ENCODE measurements at regions of chr19 and their contacts with region 1.

Region 1: GRCh38 chr19:57435062-57435978 is at the start of gene ZNF749:
- DNase-seq: peak; percentile 93 to 100 (median 96)
- ATAC-seq: peak; percentile 99
- H3K4me3 ChIP-seq: peak within 1 kb of the TSS; percentile 57 to 86
- H3K4me3 Mint-ChIP-seq: peak within 1 kb of the TSS; percentile 99
- H3K27ac ChIP-seq: peak within 1 kb of the TSS; percentile 52 to 80
- H3K27ac Mint-ChIP-seq: peak within 1 kb of the TSS; percentile 97
- H3K4me1 ChIP-seq: peaks cover 11% of the 10 kb centered on the region
- H3K4me1 Mint-ChIP-seq: peaks cover 34% of the 10 kb centered on the region
- H3K27me3 ChIP-seq: no peaks in the 10 kb centered on the region
- H3K27me3 Mint-ChIP-seq: no peaks in the 10 kb centered on the region
- CTCF ChIP-seq: no peak
- total RNA-seq, gene ZNF749: 5.6 to 9.1 TPM

Region 2: DNA sequence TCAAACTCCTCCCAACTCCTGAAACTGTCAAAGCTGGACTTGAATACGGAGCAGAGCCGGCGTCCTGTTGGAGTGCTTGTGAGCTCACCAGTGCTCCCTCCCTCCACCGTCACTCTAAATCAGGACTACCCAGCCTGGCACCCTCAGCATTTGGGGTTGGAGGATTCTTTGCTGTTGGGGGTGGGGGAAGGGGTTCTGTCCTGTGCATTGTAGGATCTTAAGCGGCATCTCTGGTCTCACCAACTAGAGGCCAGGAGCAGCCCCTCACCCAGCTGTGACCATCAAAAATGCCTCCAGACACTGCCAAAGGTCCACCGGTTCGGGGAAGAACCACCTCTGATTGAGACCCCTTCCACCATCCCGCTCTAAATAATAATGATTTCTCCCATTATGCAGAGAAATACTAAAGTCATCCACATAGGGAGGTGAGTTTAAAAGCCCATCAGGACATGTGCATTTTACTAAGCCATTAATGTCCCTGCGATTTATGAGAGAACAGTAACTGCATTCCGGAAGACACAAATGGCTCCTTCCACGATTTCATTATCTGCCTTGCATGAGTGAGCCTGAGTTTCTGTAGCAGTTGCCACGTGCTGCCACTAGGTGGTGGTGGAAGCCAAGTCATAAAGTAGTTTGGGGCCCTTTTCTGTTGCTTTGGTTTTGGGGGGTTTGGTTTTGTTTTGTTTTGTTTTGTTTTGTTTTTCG is 331.6 kb before region 1 on chr19:
- CTCF ChIA-PET with region 1: no interaction called
- POLR2A ChIA-PET with region 1: no interaction called
- intact Hi-C with region 1: loop called in 1 of 2 experiments (anchors 10 kb)
- DNase-seq: peak; percentile 14 to 79 (median 59)
- ATAC-seq: peak; percentile 97
- H3K4me3 ChIP-seq: peak overlapping the region in 1 of 2 experiments; percentile 11
- H3K4me3 Mint-ChIP-seq: peak overlapping the region; percentile 70
- H3K27ac ChIP-seq: no peak overlapping the region
- H3K27ac Mint-ChIP-seq: no peak overlapping the region
- H3K4me1 ChIP-seq: peaks cover 4% of the 10 kb centered on the region
- H3K4me1 Mint-ChIP-seq: peaks cover 6% of the 10 kb centered on the region
- H3K27me3 ChIP-seq: peaks cover 0 to 4% of the 10 kb centered on the region in 2 experiments
- H3K27me3 Mint-ChIP-seq: peaks cover 26% of the 10 kb centered on the region
- CTCF ChIP-seq: peak; percentile 82

Region 3: GRCh38 chr19:57288373-57288772 is 146.9 kb before region 1 on chr19:
- CTCF ChIA-PET with region 1: no interaction called
- POLR2A ChIA-PET with region 1: no interaction called
- intact Hi-C with region 1: no loop called
- DNase-seq: no peak
- ATAC-seq: no peak
- H3K4me3 ChIP-seq: no peak overlapping the region
- H3K4me3 Mint-ChIP-seq: no peak overlapping the region
- H3K27ac ChIP-seq: no peak overlapping the region
- H3K27ac Mint-ChIP-seq: no peak overlapping the region
- H3K4me1 ChIP-seq: no peaks in the 10 kb centered on the region
- H3K4me1 Mint-ChIP-seq: peaks cover 31% of the 10 kb centered on the region
- H3K27me3 ChIP-seq: no peaks in the 10 kb centered on the region
- H3K27me3 Mint-ChIP-seq: no peaks in the 10 kb centered on the region
- CTCF ChIP-seq: no peak

Region 4: GRCh38 chr19:57350877-57351805 is 84.2 kb before region 1 on chr19 and contains the start of gene ZNF304:
- CTCF ChIA-PET with region 1: no interaction called
- POLR2A ChIA-PET with region 1: no interaction called
- intact Hi-C with region 1: loop called in 1 of 2 experiments (anchors 2 kb)
- DNase-seq: peak; percentile 58 to 93 (median 81)
- ATAC-seq: peak; percentile 99
- H3K4me3 ChIP-seq: peak within 1 kb of the TSS; percentile 79 to 87
- H3K4me3 Mint-ChIP-seq: peak within 1 kb of the TSS; percentile 96
- H3K27ac ChIP-seq: peak within 1 kb of the TSS; percentile 68 to 73
- H3K27ac Mint-ChIP-seq: peak within 1 kb of the TSS; percentile 93
- H3K4me1 ChIP-seq: peaks cover 13% of the 10 kb centered on the region
- H3K4me1 Mint-ChIP-seq: peaks cover 32% of the 10 kb centered on the region
- H3K27me3 ChIP-seq: peaks cover 0 to 4% of the 10 kb centered on the region in 2 experiments
- H3K27me3 Mint-ChIP-seq: no peaks in the 10 kb centered on the region
- CTCF ChIP-seq: no peak
- total RNA-seq, gene ZNF304: 8.6 TPM

Region 5: GRCh38 chr19:57410877-57411671 is 24.2 kb before region 1 on chr19 and contains the start of gene ZNF17:
- CTCF ChIA-PET with region 1: no interaction called
- POLR2A ChIA-PET with region 1: no interaction called
- intact Hi-C with region 1: loop called (anchors 1 kb)
- DNase-seq: peak; percentile 83 to 96 (median 91)
- ATAC-seq: peak; percentile 100
- H3K4me3 ChIP-seq: peak within 1 kb of the TSS; percentile 82 to 99
- H3K4me3 Mint-ChIP-seq: peak within 1 kb of the TSS; percentile 96
- H3K27ac ChIP-seq: peak within 1 kb of the TSS; percentile 67 to 83
- H3K27ac Mint-ChIP-seq: peak within 1 kb of the TSS; percentile 94
- H3K4me1 ChIP-seq: peaks cover 13% of the 10 kb centered on the region
- H3K4me1 Mint-ChIP-seq: peaks cover 35% of the 10 kb centered on the region
- H3K27me3 ChIP-seq: no peaks in the 10 kb centered on the region
- H3K27me3 Mint-ChIP-seq: no peaks in the 10 kb centered on the region
- CTCF ChIP-seq: no peak
- total RNA-seq, gene ZNF17: 15.5 to 18.3 TPM

Region 6: DNA sequence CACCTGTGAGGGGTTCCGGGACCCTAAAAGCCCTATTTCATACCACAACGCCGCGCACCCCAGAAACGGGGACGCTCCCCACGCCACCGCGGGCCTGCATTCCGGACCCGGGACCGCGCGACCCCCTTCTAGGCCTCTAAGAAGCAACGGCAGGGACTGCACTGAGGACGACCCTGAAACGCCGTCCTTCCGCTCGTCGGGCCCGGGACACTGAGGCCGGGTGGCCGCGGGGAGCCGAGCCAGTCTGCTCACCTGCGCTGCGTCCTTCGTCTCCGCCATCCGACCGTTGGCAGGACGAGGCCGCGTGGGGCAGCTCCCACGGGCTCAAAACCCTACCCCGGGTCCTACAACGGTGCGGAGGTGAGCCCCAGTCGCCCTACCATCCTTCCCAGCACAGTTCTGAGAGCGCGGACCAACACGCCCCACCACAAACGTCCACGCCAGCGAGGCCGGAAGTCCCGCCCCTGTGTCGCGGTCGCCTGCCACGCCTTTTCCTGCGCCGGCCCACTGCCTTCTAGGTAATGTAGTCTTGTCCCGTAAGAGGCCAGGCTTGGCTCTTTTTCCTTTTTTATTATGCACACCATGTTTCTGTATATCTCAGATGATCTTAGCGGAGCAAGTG is 124.2 kb after region 1 on chr19 and contains the start of gene ZNF550:
- CTCF ChIA-PET with region 1: no interaction called
- POLR2A ChIA-PET with region 1: no interaction called
- intact Hi-C with region 1: loop called (anchors 1 to 2 kb)
- DNase-seq: peak; percentile 74 to 92 (median 88)
- ATAC-seq: peak; percentile 96
- H3K4me3 ChIP-seq: peak within 1 kb of the TSS; percentile 77 to 89
- H3K4me3 Mint-ChIP-seq: peak within 1 kb of the TSS; percentile 98
- H3K27ac ChIP-seq: peak within 1 kb of the TSS; percentile 64 to 70
- H3K27ac Mint-ChIP-seq: peak within 1 kb of the TSS; percentile 96
- H3K4me1 ChIP-seq: peaks cover 20% of the 10 kb centered on the region
- H3K4me1 Mint-ChIP-seq: peaks cover 32% of the 10 kb centered on the region
- H3K27me3 ChIP-seq: no peaks in the 10 kb centered on the region
- H3K27me3 Mint-ChIP-seq: no peaks in the 10 kb centered on the region
- CTCF ChIP-seq: no peak
- total RNA-seq, gene ZNF550: 15.4 to 17.6 TPM

Region 7: DNA sequence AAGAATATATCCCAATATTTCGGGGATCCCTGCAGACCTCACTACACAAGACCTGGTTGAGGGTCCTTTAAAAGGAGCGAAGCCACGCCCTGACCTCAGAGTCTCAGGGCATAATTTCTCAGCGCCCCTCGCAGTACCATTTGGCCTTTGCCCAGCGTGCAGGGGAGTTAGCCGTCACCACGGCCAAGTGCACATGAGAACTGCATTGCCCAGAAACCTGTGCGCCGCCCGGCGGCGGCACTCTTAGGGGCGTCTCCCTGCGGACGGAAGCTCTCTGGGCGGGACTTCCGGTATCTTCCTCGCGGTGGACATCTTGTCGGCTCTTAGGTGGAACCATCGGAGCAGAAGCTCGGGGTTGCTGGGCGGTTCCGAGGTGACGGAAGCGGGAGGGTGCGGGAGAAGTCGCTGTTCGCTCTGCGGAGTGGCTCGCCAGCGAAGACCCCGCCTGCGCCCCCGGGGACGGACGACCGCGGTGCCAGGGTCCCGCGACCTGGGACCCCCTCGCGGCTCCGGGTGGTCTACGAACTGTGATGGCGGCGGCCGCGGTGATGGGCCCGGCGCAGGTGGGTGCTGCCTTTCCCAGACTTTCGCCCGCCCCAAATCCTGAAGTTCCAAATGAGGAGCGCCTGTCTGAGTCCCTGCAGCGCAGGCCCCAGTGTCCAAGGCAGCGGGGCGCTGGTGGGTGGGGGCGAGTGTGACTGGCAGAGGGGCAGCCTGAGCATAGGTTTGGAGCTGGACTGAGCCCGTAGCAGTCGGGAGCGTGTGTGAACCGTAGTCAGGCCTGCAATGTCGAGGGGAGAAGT is 178.8 kb after region 1 on chr19 and contains the start of gene ZNF134:
- CTCF ChIA-PET with region 1: no interaction called
- POLR2A ChIA-PET with region 1: no interaction called
- intact Hi-C with region 1: loop called in 1 of 2 experiments (anchors 2 kb)
- DNase-seq: peak; percentile 77 to 94 (median 91)
- ATAC-seq: peak; percentile 99
- H3K4me3 ChIP-seq: peak within 1 kb of the TSS; percentile 78 to 90
- H3K4me3 Mint-ChIP-seq: peak within 1 kb of the TSS; percentile 90
- H3K27ac ChIP-seq: peak within 1 kb of the TSS; percentile 37 to 63
- H3K27ac Mint-ChIP-seq: peak within 1 kb of the TSS; percentile 90
- H3K4me1 ChIP-seq: peaks cover 13% of the 10 kb centered on the region
- H3K4me1 Mint-ChIP-seq: peaks cover 31% of the 10 kb centered on the region
- H3K27me3 ChIP-seq: no peaks in the 10 kb centered on the region
- H3K27me3 Mint-ChIP-seq: no peaks in the 10 kb centered on the region
- CTCF ChIP-seq: peak; percentile 16
- total RNA-seq, gene ZNF134: 35.2 to 36.5 TPM

Region 8: DNA sequence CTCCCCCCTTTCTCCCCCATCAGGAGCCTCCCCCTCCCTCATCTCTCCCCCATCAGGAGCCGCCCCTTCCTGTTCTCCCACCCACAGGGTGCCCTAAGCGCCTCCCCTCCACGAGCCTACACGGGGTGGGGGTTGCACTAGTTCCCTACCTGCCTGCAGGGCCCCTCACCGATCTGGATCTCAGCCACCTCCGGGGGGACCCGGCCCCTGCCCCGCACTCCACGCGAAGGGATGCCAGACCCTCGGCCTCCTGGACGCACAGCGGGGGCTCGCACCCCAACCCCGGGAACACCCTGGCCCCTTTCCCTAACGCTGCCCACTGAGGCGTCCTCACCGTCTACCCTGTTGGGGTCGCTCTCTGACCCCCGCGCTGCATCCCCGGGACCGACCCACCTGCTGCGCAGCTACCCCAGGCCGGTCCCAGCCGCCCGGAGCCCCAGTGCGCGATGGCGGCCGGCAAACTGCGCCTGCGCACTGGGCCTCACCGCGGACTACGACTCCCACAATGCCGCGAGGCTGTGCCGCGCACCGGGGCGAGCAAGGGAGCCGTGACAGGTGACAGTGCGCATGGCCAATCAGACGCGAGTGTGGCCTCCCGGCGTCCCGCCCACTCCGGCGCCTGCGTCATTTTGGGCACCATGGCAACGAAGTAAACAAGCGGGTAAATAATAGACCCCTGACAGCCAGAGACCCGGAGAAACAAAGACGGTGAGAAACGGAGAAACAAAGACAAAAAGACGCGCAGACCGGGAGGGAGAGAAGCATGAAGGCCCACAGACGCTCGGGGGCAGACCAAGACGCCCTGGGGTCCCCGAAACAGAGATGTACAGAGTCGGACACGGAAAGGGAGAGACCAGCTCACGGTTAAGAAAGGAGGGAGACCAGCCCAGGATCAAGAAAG is 662.7 kb after region 1 on chr19 and contains the start of gene ZSCAN18:
- CTCF ChIA-PET with region 1: no interaction called
- POLR2A ChIA-PET with region 1: no interaction called
- intact Hi-C with region 1: loop called in 1 of 2 experiments (anchors 1 kb)
- DNase-seq: peak; percentile 90 to 99 (median 97)
- ATAC-seq: peak; percentile 95
- H3K4me3 ChIP-seq: peak within 1 kb of the TSS; percentile 90 to 98
- H3K4me3 Mint-ChIP-seq: peak within 1 kb of the TSS; percentile 88
- H3K27ac ChIP-seq: peak within 1 kb of the TSS; percentile 97 to 100
- H3K27ac Mint-ChIP-seq: peak within 1 kb of the TSS; percentile 100
- H3K4me1 ChIP-seq: peaks cover 12% of the 10 kb centered on the region
- H3K4me1 Mint-ChIP-seq: peaks cover 18% of the 10 kb centered on the region
- H3K27me3 ChIP-seq: no peaks in the 10 kb centered on the region
- H3K27me3 Mint-ChIP-seq: no peaks in the 10 kb centered on the region
- CTCF ChIP-seq: no peak
- total RNA-seq, gene ZSCAN18: 57.6 to 61.0 TPM

Measured in CD8-positive, alpha-beta T cell (primary cell).